ENCODE measurements at regions of chr2 and their contacts with region 1.

Region 1: DNA sequence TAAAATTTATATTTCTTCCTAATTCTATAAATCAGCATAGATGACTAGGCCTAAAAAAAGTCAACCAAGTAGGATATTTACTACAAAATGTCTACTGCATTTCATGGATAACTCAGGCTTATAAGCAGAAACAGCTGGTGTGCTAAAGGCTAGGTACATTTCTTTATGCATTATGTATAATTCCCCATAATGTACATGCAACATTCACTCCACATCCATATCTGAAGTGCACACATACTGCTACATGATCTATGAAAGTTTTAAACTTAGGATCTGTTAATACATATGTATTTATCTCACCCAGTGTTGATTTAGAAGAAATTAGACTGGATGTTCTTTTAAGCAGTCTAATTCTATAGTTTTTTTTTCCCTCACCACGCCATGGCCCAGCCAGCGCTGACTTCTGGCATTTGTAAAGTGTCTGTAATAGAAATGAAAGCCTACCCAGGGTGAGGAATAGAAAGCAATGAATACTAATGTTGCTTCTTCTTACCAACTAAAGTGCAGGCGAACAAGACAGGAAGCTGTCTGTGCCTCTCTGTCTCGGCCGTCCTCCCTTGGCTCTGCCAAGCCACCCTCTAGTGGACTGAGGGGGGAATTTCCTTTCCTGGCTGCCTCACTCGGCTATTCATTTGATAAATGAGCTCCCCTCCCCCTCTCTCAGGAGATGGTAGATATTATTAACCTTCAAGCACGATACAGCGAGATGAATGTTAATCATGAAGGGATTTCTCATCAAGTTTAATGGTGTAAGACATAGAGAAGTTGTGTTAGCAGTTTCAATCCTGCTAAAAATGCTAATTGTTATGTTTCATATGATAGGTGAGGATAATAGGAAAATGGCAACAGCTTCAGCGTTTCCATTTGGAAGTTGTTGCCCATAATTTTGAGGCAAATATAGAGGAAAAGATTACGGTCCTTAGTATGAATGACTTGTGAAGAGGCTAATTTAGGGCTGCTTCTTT is 384.5 kb downstream of the MTX2 start:
- H3K4me3 ChIP-seq: no peak overlapping the region
- H3K27ac ChIP-seq: no peak overlapping the region
- H3K4me1 ChIP-seq: peaks cover 7% of the 10 kb centered on the region
- CTCF ChIP-seq: peak; percentile 78

Region 2: DNA sequence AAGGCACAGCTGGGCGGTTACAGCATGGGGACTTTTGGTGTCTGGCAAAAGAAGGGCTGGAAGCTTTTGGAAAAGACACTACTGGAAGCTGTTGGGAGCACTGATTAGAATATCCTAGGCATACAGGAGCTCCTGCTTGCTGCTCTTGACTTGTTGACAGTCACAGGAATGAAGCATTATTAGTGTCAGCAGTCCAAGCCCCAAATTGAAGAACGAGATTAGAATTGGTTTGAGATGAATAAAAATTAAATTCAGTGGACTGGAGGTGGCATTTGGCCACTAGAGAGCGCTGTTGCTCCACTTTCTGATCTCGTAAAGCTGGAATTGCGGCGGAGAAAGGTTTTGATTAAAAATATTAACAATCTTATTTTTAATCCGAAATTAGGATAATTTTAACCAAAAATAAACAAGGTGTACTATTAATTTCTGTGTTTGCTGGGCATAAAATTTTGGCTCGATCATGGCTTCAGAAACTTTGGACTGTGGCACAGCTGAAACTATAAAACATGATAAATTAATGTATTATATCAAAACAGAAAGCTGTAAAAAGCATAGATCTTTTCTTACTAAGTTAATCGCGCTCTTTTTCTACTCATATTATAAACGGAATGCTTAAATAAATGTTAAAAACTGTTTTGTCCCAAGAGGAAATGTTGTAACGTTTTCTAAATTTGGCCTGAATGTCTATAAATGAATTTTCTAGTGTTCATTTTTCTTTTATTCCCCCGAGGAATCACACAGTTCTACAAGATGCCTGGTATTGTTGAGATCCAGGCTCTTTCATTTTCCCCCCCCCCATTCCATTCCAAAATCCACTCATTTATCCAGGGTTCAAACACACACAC is 526.6 kb before region 1 on chr2:
- CTCF ChIA-PET with region 1: interaction called, 51 read pairs
- POLR2A ChIA-PET with region 1: no interaction called
- H3K4me3 ChIP-seq: no peak overlapping the region
- H3K27ac ChIP-seq: no peak overlapping the region
- H3K4me1 ChIP-seq: peaks cover 5% of the 10 kb centered on the region; the same call in 1 of the 2 replicates
- CTCF ChIP-seq: peak; percentile 63

Region 3: DNA sequence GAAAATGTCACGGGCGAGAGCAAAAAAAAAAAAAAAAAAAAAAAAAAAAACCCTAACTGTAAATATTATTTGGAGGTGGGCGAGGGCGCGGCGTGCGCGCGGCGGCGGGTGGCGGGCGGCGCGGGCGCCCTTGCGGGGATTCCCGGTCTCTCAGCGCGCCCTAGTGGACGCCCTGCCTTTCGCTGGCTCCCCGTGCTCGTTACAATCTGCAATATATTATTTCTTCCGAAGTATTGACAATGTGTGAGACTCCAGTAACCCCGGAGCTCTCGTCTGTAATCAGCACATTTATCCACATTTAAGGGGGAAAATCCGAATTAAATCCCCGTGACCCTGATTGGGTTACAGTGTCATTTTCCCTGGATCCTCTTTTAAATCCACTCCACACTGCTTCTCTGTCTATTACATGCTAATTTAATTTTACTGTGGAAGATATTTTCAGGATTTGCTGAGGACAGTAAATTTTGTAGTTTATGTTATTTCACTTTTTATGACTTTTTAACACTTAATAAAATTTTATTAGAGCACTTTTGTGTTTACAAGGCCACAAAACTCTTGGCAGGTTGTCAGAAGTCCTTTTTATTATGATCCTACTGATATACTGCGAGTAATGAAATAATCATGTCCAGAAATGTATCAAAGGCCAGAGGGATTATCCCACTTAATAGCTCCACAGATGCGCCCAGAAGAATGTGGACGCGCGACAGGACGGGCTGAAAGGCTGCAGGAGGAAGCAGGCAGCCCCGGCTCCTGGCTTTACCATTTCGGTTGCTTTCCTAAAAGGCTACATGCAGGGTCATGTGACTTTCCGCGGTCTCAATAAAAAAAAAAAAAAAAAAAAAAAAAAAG is 15.4 kb before region 1 on chr2:
- CTCF ChIA-PET with region 1: interaction called, 60 read pairs
- POLR2A ChIA-PET with region 1: no interaction called
- H3K4me3 ChIP-seq: peak overlapping the region; percentile 69
- H3K27ac ChIP-seq: peak overlapping the region; percentile 94
- H3K4me1 ChIP-seq: 0 out of 2 replicates have a peak, but pooled peaks cover 2% of the 10 kb centered on the region
- CTCF ChIP-seq: no peak

Region 4: GRCh38 chr2:176669398-176670174 is 15.8 kb after region 1 on chr2:
- CTCF ChIA-PET with region 1: interaction called, 54 read pairs
- POLR2A ChIA-PET with region 1: no interaction called
- H3K4me3 ChIP-seq: no peak overlapping the region
- H3K27ac ChIP-seq: no peak overlapping the region
- H3K4me1 ChIP-seq: no peaks in the 10 kb centered on the region
- CTCF ChIP-seq: no peak

Region 5: DNA sequence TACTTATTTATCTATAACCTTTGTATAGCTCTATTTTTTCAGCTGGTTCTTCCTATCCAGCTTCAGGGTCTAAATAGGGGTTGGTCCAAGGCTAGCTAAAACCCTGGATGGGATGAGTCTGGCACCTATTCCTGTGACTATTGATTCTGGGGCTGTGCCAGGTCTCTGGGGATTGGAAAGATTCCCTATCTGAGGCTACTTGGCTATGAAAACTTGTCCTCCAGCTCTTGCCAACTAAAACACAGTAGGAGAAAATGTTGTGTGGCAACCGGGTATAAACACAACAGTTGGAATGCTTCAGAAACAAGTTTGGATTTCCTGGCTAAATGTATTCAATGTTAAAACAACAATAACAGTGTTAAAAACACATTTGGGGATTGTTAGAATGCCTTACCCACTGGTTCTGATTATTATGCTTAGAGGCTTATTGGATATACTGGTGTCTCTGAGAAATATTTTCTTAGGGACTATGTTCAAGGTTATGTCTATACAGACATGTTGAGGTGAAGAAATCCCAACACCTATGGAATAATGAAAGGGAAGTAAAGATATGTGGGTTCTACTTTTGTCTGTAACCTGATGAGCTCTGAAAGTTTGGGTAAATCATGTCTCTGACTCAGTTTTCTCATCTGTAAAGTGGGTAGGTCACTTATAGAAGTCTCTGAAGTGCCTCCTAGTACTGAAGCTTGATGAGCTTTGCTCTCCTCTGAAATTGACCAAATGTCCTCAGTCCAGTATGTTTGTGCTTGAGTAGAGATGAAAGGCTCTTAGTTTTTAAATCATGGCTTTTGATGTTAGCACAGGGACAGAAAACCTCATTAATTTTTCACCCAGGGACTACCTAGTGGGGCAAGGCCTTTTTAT is 76.2 kb after region 1 on chr2:
- CTCF ChIA-PET with region 1: no interaction called
- POLR2A ChIA-PET with region 1: no interaction called
- H3K4me3 ChIP-seq: no peak overlapping the region
- H3K27ac ChIP-seq: no peak overlapping the region
- H3K4me1 ChIP-seq: no peaks in the 10 kb centered on the region
- CTCF ChIP-seq: no peak

Region 6: GRCh38 chr2:177148477-177149154 is 494.9 kb after region 1 on chr2:
- CTCF ChIA-PET with region 1: interaction called, 39 read pairs
- POLR2A ChIA-PET with region 1: no interaction called
- H3K4me3 ChIP-seq: peak overlapping the region; percentile 42
- H3K27ac ChIP-seq: no peak overlapping the region
- H3K4me1 ChIP-seq: no peaks in the 10 kb centered on the region
- CTCF ChIP-seq: peak; percentile 88

Region 7: DNA sequence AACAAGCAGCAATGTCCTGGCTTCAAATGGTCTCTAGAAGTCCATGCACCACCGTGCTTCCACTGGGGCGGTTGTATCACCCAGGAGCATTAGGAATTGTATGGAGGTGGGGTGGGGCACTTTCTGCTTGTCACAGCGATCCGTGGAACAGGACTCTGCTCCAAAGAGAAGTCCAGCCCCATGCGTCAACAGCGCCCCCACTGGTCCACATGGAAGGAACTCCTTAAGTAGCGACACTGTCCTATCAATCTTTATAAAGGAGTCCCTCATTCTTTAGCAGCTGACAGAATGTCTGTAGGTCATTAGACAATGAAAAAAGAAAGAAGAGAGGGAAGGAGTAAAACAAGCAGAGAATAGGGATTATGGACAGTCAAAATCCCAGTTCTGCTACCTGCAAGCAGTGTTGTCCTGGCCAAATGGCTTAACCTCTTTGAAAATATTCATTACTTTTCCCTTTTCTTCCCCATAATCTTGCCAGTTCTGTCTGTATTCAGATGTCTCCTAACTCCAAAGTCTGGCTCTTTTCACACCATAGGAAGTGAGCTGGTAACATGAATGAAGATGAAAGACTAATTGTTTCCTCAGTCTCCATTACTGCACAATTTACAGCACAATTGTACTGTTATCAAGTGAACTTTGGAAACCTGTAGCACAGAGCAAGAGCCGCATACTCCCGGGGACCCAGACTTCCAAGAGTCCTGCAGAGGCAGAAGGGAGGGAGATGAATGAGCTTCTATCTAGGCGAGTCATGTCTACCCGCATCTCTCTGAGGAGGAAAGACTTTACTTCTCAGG is 600.9 kb after region 1 on chr2:
- CTCF ChIA-PET with region 1: no interaction called
- POLR2A ChIA-PET with region 1: no interaction called
- H3K4me3 ChIP-seq: no peak overlapping the region
- H3K27ac ChIP-seq: no peak overlapping the region
- H3K4me1 ChIP-seq: no peaks in the 10 kb centered on the region
- CTCF ChIP-seq: peak; percentile 74